ENCODE measurements at regions of chr6 and their contacts with region 1.

Region 1: GRCh38 chr6:18122124-18123093 is at the start of gene NHLRC1:
- DNase-seq: peak; percentile 81 to 89 (median 84)
- H3K4me3 ChIP-seq: peak within 1 kb of the TSS; percentile 60
- H3K27ac ChIP-seq: no peak within 1 kb of the TSS
- H3K4me1 ChIP-seq: peaks cover 3% of the 10 kb centered on the region
- H3K27me3 ChIP-seq: no peaks in the 10 kb centered on the region
- CTCF ChIP-seq: peak; percentile 73 to 91 (median 86)
- EP300 ChIP-seq: no peak
- POLR2A ChIP-seq: peak; percentile 20
- total RNA-seq, gene NHLRC1: 0.46 to 1.7 (median 1.2) TPM

Region 2: DNA sequence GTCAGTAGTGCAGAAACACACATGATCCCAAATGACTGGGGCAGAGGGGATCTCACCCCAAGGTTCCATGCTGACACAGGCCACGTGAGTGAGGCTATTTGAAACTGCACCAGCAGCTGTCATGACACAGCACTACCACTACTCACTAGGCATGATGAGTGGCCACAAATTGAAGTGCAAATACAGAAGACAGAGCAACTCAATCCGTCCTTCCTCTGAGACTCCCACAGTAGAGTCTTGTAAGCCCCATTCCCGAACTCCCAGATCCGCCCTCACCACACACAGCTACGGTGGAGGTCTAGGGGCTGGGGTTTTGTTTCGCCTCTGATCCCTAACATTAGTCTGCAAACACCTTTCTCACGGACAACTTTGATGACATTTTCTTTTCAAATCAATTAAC is 302.4 kb before region 1 on chr6:
- intact Hi-C with region 1: loop called in 1 of 4 experiments (anchors 10 kb)
- DNase-seq: no peak
- H3K4me3 ChIP-seq: no peak overlapping the region
- H3K27ac ChIP-seq: no peak overlapping the region
- H3K4me1 ChIP-seq: no peaks in the 10 kb centered on the region
- H3K27me3 ChIP-seq: no peaks in the 10 kb centered on the region
- CTCF ChIP-seq: no peak
- EP300 ChIP-seq: no peak
- POLR2A ChIP-seq: no peak

Region 3: DNA sequence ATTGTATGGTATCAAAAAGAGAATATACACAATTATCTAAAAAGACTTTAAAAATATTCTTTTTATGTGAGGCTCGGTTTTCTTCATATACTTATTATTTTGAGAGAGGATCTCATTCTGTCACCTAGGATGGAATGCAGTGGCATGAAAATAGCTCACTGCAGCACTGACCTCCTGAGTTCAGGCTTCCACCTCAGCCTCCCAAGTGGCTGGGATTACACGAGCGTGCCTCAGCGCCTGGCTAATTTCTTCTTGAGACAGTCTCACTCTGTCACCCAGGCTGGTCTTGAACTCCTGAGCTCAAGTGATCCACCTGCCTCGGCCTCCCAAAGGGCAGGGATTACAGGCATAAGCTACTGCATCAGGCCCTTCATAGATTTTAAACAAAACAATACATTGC is 131.2 kb after region 1 on chr6:
- intact Hi-C with region 1: no loop called
- DNase-seq: no peak
- H3K4me3 ChIP-seq: no peak overlapping the region
- H3K27ac ChIP-seq: no peak overlapping the region
- H3K4me1 ChIP-seq: no peaks in the 10 kb centered on the region
- H3K27me3 ChIP-seq: no peaks in the 10 kb centered on the region
- CTCF ChIP-seq: no peak
- EP300 ChIP-seq: no peak
- POLR2A ChIP-seq: no peak